ENCODE measurements at regions of chr4 and their contacts with region 1.

Region 1: GRCh38 chr4:158671915-158672806 is at the start of gene ETFDH:
- DNase-seq: peak; percentile 99
- ATAC-seq: peak; percentile 88
- H3K4me3 ChIP-seq: peak within 1 kb of the TSS; percentile 89
- H3K27ac ChIP-seq: peak within 1 kb of the TSS; percentile 85
- H3K4me1 ChIP-seq: no peaks in the 10 kb centered on the region
- H3K27me3 ChIP-seq: no peaks in the 10 kb centered on the region
- CTCF ChIP-seq: peak; percentile 63 to 82 (median 71)
- EP300 ChIP-seq: no peak
- POLR2A ChIP-seq: peak; percentile 89
- RAD21 ChIP-seq: no peak
- polyA plus RNA-seq, gene ETFDH: 10.9 to 17.9 TPM

Region 2: GRCh38 chr4:158250321-158250720 is 421.8 kb before region 1 on chr4:
- CTCF ChIA-PET with region 1: no interaction called
- POLR2A ChIA-PET with region 1: no interaction called
- RAD21 ChIA-PET with region 1: no interaction called
- SMC1A ChIA-PET with region 1: no interaction called
- in situ Hi-C with region 1: no loop called
- intact Hi-C with region 1: no loop called
- DNase-seq: no peak
- ATAC-seq: no peak
- H3K4me3 ChIP-seq: no peak overlapping the region
- H3K27ac ChIP-seq: no peak overlapping the region
- H3K4me1 ChIP-seq: no peaks in the 10 kb centered on the region
- H3K27me3 ChIP-seq: no peaks in the 10 kb centered on the region
- CTCF ChIP-seq: no peak
- EP300 ChIP-seq: no peak
- POLR2A ChIP-seq: no peak
- RAD21 ChIP-seq: no peak

Region 3: GRCh38 chr4:158722917-158723793 is 51.0 kb after region 1 on chr4 and contains the start of gene PPID:
- CTCF ChIA-PET with region 1: no interaction called
- POLR2A ChIA-PET with region 1: no interaction called
- RAD21 ChIA-PET with region 1: no interaction called
- SMC1A ChIA-PET with region 1: no interaction called
- in situ Hi-C with region 1: no loop called
- intact Hi-C with region 1: loop called (anchors 1 kb)
- DNase-seq: peak; percentile 49
- ATAC-seq: peak; percentile 97
- H3K4me3 ChIP-seq: peak within 1 kb of the TSS; percentile 96
- H3K27ac ChIP-seq: peak within 1 kb of the TSS; percentile 82
- H3K4me1 ChIP-seq: no peaks in the 10 kb centered on the region
- H3K27me3 ChIP-seq: no peaks in the 10 kb centered on the region
- CTCF ChIP-seq: no peak
- EP300 ChIP-seq: no peak
- POLR2A ChIP-seq: peak; percentile 87
- RAD21 ChIP-seq: no peak
- polyA plus RNA-seq, gene PPID: 24.4 to 43.9 TPM

Measured in GM12878 (cell line).